OCI-LY7 (cell line): ENCODE measurements at regions of chr14 and their contacts with region 1.

Region 1: DNA sequence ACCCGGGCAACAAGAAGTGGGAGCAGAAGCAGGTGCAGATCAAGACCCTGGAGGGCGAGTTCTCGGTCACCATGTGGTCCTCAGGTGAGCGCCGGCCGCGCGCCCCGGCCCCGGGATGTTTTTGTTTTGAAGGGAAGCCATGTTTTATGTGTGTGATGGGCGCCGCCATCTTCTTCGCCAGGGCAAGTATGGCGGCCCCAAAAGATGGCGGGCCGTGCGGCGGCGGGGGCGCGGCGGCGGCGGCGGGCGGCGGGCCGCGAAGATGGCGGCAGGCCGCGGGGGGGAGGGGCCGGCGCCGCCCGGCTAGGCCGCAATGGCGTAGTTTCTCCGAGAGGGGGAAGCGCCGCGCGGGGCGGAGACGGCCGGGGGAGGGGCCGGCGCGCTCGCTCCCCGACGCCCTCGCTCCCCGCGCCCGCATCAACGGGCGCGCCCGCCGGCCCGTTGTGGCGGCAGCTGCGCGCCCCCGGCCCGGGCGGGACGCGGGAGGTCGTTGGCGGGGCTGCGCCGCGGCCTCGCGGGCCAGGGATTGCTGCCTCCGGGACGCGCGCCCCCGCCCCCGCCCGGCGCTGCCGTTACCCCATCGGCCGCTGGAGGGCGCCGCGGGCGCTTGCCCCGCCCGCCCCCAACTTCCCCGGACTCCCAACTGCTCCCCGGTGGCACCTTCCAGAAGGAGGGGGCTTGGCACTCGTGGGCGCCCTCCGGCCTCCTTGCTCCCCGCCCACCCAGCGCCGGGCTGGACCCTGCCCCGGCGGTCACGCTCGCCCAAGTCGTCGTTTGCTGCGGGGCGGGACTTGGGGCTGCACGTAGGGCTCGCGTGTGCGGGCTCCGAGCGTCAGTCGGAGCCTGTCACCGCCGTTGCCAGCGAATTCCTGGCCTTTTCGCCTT is 1.1 kb downstream of the YY1 start:
- DNase-seq: peak; percentile 86
- H3K4me3 ChIP-seq: peak overlapping the region; percentile 100
- H3K27ac ChIP-seq: peak overlapping the region; percentile 87
- H3K4me1 ChIP-seq: peaks cover 59% of the 10 kb centered on the region
- CTCF ChIP-seq: peak; percentile 73

Region 2: DNA sequence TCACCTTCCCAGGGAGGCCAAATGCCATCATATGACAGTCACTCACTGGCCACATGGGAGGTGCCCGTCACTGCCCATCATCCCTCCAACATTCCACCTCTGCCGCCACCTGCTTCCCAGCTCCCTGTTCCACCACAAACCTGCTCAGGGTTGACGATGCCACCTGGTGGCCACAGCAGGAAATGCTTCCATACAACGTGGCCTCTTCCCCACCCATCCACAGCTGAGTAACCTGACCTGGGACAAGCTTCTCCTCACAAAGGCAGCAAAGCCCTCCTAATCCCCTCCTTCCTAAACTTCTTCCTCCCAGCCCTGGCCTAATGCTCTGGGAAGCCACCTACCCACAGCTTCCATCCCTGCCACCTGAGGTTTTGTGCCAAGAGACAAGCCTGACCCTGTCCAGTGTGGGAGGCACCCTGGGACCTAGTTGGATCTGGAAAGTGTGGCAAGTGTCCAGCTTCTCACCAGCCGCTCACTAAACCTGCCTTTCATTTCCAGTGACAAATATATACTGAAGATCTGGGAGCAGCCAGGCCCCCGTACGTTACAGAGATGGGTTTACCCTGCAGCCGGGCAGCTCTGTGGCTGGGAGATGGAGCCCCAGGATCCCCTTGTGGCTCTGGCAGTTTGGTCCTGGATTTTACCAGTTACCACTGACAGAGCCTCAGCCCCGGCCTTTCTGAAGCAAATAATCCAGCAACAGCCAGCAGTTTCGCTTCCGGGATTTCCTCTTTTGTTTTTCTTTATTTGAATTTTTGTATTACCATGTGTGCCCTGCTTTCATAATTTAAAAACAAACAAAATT is 84.8 kb before region 1 on chr14:
- CTCF ChIA-PET with region 1: no interaction called
- POLR2A ChIA-PET with region 1: interaction called, 5 read pairs
- intact Hi-C with region 1: loop called (anchors 5 kb)
- DNase-seq: peak; percentile 54
- H3K4me3 ChIP-seq: no peak overlapping the region
- H3K27ac ChIP-seq: no peak overlapping the region
- H3K4me1 ChIP-seq: peaks cover 32% of the 10 kb centered on the region
- CTCF ChIP-seq: peak; percentile 91

Region 3: DNA sequence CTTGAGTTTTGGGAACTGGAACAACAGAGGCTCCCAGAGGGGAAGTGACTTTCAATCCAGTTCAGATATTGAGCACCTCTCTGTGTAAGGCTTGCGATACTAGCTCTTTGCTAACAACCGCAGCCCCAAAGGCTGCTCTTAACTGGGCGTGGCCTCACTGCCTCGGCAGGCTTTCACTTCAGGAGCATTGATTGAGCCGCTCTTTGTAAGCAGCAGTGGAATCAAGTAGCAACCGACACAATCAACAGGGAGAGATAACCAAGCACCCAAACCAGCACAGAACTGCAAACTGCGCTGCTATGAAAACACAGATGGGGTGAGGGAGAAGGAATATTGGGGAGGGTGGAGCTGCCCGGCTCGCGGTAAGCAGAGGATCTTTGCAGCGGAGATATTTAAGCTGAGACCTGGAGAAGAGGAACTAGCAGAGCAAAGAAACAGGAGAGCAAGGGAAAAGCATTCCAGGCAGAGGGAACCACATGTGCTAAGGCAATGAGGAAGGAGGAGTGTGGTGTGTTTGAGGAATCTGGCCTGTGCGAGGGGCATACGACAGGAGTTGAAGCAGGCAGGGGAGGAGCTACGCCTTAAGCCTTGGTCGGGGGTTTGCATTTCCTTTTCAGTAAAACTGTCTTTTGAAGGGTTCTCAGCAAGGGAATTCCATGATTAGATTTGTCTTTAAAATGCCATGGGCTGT is 18.4 kb before region 1 on chr14:
- CTCF ChIA-PET with region 1: no interaction called
- POLR2A ChIA-PET with region 1: interaction called, 24 read pairs
- intact Hi-C with region 1: no loop called
- DNase-seq: peak; percentile 67
- H3K4me3 ChIP-seq: peak overlapping the region; percentile 54
- H3K27ac ChIP-seq: peak overlapping the region; percentile 1
- H3K4me1 ChIP-seq: peaks cover 35% of the 10 kb centered on the region
- CTCF ChIP-seq: no peak

Region 4: GRCh38 chr14:100285021-100285912 is 45.2 kb after region 1 on chr14:
- CTCF ChIA-PET with region 1: no interaction called
- POLR2A ChIA-PET with region 1: no interaction called
- intact Hi-C with region 1: loop called (anchors 5 kb)
- DNase-seq: peak; percentile 82
- H3K4me3 ChIP-seq: peak overlapping the region; percentile 76
- H3K27ac ChIP-seq: peak overlapping the region; percentile 47
- H3K4me1 ChIP-seq: peaks cover 17% of the 10 kb centered on the region
- CTCF ChIP-seq: peak; percentile 84